A673 (cell line): ENCODE measurements at regions of chr5 and their contacts with region 1.

Region 1: GRCh38 chr5:115098041-115098702 is 71.5 kb downstream of the TRIM36 start:
- DNase-seq: peak; percentile 73
- H3K4me3 ChIP-seq: no peak overlapping the region
- H3K27ac ChIP-seq: no peak overlapping the region
- H3K4me1 ChIP-seq: peaks cover 3% of the 10 kb centered on the region
- H3K27me3 ChIP-seq: no peaks in the 10 kb centered on the region
- CTCF ChIP-seq: peak; percentile 86

Region 2: GRCh38 chr5:115151208-115151805 is 53.1 kb after region 1 on chr5:
- CTCF ChIA-PET with region 1: no interaction called
- POLR2A ChIA-PET with region 1: no interaction called
- intact Hi-C with region 1: no loop called
- DNase-seq: no peak
- H3K4me3 ChIP-seq: no peak overlapping the region
- H3K27ac ChIP-seq: no peak overlapping the region
- H3K4me1 ChIP-seq: no peaks in the 10 kb centered on the region
- H3K27me3 ChIP-seq: no peaks in the 10 kb centered on the region
- CTCF ChIP-seq: no peak

Region 3: DNA sequence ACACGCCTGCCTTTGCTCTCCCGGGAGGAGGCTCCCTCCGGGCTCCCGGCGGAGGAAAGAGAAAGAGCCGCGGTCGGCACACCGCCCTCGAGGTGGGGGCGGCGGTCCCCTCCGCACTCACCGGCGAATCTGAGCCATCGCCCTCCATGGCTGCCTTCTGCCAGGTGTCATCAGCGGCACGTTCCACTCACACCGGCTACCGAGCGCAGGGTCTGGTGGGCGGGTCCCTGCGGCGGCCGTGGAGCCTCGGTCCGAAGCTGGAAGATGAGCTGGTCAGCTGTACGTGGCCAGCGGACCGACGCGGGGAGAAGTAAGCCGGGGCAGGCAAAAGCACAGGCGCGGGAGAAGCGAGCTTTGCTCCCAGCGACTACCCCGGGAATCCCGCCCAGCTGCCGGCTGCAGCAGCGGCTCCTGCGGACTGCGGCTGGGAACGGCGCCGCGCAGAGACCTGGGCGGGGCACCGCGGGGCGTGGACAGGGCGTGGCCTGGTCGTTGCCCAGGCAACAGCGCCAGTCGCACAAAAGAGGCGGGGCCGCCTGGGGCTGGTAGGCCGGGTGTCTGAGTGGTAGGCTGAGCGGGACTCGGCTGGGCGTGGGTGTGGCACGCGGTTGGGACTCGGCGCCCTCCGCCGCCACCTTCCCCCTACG is 71.4 kb after region 1 on chr5 and contains the start of gene TRIM36:
- CTCF ChIA-PET with region 1: no interaction called
- POLR2A ChIA-PET with region 1: no interaction called
- intact Hi-C with region 1: loop called (anchors 5 kb)
- DNase-seq: peak; percentile 97
- H3K4me3 ChIP-seq: peak within 1 kb of the TSS; percentile 96
- H3K27ac ChIP-seq: peak within 1 kb of the TSS; percentile 75
- H3K4me1 ChIP-seq: no peaks in the 10 kb centered on the region
- H3K27me3 ChIP-seq: no peaks in the 10 kb centered on the region
- CTCF ChIP-seq: peak; percentile 44
- total RNA-seq, gene TRIM36: 16.8 and 17.5 TPM in 2 replicates

Region 4: DNA sequence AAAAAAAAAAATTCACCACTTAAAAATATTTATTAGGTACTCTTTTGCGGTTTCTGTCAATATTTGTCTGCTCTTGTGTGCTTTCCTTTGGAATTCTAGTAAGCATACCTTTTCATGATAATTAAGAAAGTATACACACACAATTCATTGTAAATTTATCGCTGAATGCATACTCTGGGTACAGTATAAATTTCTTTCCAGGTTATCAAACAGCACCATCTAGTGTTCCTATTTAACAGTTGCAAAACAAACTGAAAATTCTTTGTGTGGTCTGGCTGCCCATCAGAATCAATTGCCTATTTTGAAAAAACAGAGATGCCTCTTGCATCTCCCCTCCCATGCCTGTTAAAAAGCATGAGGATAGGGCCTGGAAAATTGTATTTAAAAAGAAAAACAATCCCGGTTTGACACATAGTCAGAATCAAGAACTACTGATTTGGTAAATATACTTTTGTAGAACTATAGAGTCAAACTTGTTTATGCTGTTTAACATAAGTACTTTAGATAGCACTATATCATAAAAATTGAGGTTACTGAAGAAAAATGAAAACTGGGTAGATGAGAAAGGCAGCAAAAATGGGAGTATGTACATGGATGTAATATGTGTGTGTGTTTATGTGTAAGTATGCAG is 148.3 kb after region 1 on chr5:
- CTCF ChIA-PET with region 1: no interaction called
- POLR2A ChIA-PET with region 1: no interaction called
- intact Hi-C with region 1: loop called (anchors 1 kb)
- DNase-seq: peak; percentile 64
- H3K4me3 ChIP-seq: no peak overlapping the region
- H3K27ac ChIP-seq: no peak overlapping the region
- H3K4me1 ChIP-seq: no peaks in the 10 kb centered on the region
- H3K27me3 ChIP-seq: no peaks in the 10 kb centered on the region
- CTCF ChIP-seq: peak; percentile 76

Region 5: GRCh38 chr5:115586601-115587048 is 488.5 kb after region 1 on chr5:
- CTCF ChIA-PET with region 1: no interaction called
- POLR2A ChIA-PET with region 1: no interaction called
- intact Hi-C with region 1: loop called (anchors 5 kb)
- DNase-seq: peak; percentile 50
- H3K4me3 ChIP-seq: no peak overlapping the region
- H3K27ac ChIP-seq: no peak overlapping the region
- H3K4me1 ChIP-seq: no peaks in the 10 kb centered on the region
- H3K27me3 ChIP-seq: no peaks in the 10 kb centered on the region
- CTCF ChIP-seq: peak; percentile 68